ENCODE measurements at regions of chr15 and their contacts with region 1.

Region 1: GRCh38 chr15:61011576-61012336 is 217.3 kb downstream of the RORA start:
- DNase-seq: no peak
- ATAC-seq: no peak
- H3K4me3 ChIP-seq: no peak overlapping the region
- H3K4me3 Mint-ChIP-seq: no peak overlapping the region
- H3K27ac ChIP-seq: no peak overlapping the region
- H3K27ac Mint-ChIP-seq: no peak overlapping the region
- H3K4me1 ChIP-seq: no peaks in the 10 kb centered on the region
- H3K4me1 Mint-ChIP-seq: no peaks in the 10 kb centered on the region
- H3K27me3 ChIP-seq: peaks cover 4 to 6% of the 10 kb centered on the region in 2 experiments
- H3K27me3 Mint-ChIP-seq: peaks cover 34% of the 10 kb centered on the region
- CTCF ChIP-seq: no peak

Region 2: DNA sequence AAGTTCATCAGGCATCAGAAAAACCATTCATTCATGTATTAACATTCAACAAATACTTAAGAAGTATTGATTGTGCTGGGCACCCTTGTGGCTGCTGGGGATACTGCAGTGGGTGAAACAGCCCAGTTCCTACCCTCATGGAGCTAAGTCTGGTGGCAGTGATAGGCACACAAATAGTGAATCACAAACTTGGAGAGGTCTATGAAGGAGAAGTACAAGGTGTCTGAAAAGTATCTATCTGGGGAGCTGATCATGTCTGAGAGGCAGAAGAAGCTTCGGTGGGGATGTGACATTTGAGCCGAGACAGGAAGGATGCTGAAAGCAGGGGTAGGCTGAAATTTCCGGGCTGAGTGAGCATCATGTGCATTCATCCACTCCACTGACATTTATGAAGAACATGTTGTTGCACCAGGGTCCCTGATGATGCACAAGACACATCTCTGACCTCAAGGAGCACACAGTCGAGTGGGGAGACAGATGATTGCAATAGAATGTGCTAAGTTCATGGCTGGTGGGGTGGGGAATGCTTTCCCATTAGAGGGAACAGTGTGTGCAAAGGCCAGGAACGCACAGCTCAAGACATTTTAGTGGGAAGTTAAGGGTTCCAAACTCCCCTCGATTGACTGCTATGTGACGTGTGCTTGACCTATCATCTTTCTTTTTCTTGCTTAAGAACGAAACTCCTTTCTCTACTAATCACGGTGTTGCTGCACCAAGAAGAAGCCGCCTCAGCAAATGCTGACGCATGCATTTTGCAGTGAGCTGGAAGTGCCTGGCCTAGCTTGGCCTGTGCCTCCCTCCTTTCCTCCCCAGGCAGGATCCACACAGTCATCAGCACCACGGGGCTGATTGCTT is 223.7 kb before region 1 on chr15:
- CTCF ChIA-PET with region 1: no interaction called
- POLR2A ChIA-PET with region 1: no interaction called
- intact Hi-C with region 1: no loop called
- DNase-seq: peak in 6 of 9 experiments; percentile 27 to 53 (median 42)
- ATAC-seq: peak; percentile 76
- H3K4me3 ChIP-seq: no peak overlapping the region
- H3K4me3 Mint-ChIP-seq: peak overlapping the region; percentile 13
- H3K27ac ChIP-seq: no peak overlapping the region
- H3K27ac Mint-ChIP-seq: peak overlapping the region; percentile 74
- H3K4me1 ChIP-seq: peaks cover 5% of the 10 kb centered on the region
- H3K4me1 Mint-ChIP-seq: peaks cover 14% of the 10 kb centered on the region
- H3K27me3 ChIP-seq: no peaks in the 10 kb centered on the region
- H3K27me3 Mint-ChIP-seq: no peaks in the 10 kb centered on the region
- CTCF ChIP-seq: peak; percentile 50

Region 3: GRCh38 chr15:61038387-61038786 is 26.6 kb after region 1 on chr15:
- CTCF ChIA-PET with region 1: no interaction called
- POLR2A ChIA-PET with region 1: no interaction called
- intact Hi-C with region 1: no loop called
- DNase-seq: no peak
- ATAC-seq: no peak
- H3K4me3 ChIP-seq: no peak overlapping the region
- H3K4me3 Mint-ChIP-seq: no peak overlapping the region
- H3K27ac ChIP-seq: no peak overlapping the region
- H3K27ac Mint-ChIP-seq: no peak overlapping the region
- H3K4me1 ChIP-seq: no peaks in the 10 kb centered on the region
- H3K4me1 Mint-ChIP-seq: no peaks in the 10 kb centered on the region
- H3K27me3 ChIP-seq: peaks cover 0 to 2% of the 10 kb centered on the region in 2 experiments
- H3K27me3 Mint-ChIP-seq: peaks cover 31% of the 10 kb centered on the region
- CTCF ChIP-seq: no peak

Region 4: DNA sequence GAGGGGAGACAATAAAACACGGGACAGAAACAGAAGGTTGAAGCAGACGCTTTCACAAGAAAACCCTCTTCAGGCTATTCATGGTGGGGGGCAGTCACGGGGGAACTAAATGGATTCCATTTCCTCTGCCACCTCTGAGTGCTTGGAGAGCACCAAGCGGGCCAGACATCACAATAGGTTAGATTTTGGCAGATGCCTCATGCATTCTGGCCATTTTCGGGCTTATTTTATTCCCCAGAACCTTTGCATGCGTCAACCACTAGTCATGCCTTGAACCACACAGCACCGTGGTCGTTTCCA is 135.1 kb after region 1 on chr15:
- CTCF ChIA-PET with region 1: no interaction called
- POLR2A ChIA-PET with region 1: no interaction called
- intact Hi-C with region 1: no loop called
- DNase-seq: no peak
- ATAC-seq: no peak
- H3K4me3 ChIP-seq: no peak overlapping the region
- H3K4me3 Mint-ChIP-seq: no peak overlapping the region
- H3K27ac ChIP-seq: no peak overlapping the region
- H3K27ac Mint-ChIP-seq: no peak overlapping the region
- H3K4me1 ChIP-seq: no peaks in the 10 kb centered on the region
- H3K4me1 Mint-ChIP-seq: no peaks in the 10 kb centered on the region
- H3K27me3 ChIP-seq: no peaks in the 10 kb centered on the region
- H3K27me3 Mint-ChIP-seq: peaks cover 18% of the 10 kb centered on the region
- CTCF ChIP-seq: no peak

Region 5: GRCh38 chr15:62879770-62880169 is 1868.0 kb after region 1 on chr15:
- CTCF ChIA-PET with region 1: no interaction called
- POLR2A ChIA-PET with region 1: no interaction called
- intact Hi-C with region 1: loop called in 1 of 2 experiments (anchors 10 kb)
- DNase-seq: no peak
- ATAC-seq: no peak
- H3K4me3 ChIP-seq: no peak overlapping the region
- H3K4me3 Mint-ChIP-seq: no peak overlapping the region
- H3K27ac ChIP-seq: no peak overlapping the region
- H3K27ac Mint-ChIP-seq: no peak overlapping the region
- H3K4me1 ChIP-seq: no peaks in the 10 kb centered on the region
- H3K4me1 Mint-ChIP-seq: peaks cover 4% of the 10 kb centered on the region
- H3K27me3 ChIP-seq: no peaks in the 10 kb centered on the region
- H3K27me3 Mint-ChIP-seq: peaks cover 9% of the 10 kb centered on the region
- CTCF ChIP-seq: no peak